Activated CD4-positive, alpha-beta memory T cell treated with anti-CD3 and anti-CD28 coated beads for 36 hours (primary cell): ENCODE measurements at regions of chr10 and their contacts with region 1.

Region 1: GRCh38 chr10:13776861-13777311 is 190.1 kb downstream of the PRPF18 start:
- DNase-seq: no peak
- H3K4me3 Mint-ChIP-seq: no peak overlapping the region
- H3K27ac Mint-ChIP-seq: no peak overlapping the region
- H3K4me1 Mint-ChIP-seq: no peaks in the 10 kb centered on the region
- H3K27me3 Mint-ChIP-seq: peaks cover 16% of the 10 kb centered on the region

Region 2: DNA sequence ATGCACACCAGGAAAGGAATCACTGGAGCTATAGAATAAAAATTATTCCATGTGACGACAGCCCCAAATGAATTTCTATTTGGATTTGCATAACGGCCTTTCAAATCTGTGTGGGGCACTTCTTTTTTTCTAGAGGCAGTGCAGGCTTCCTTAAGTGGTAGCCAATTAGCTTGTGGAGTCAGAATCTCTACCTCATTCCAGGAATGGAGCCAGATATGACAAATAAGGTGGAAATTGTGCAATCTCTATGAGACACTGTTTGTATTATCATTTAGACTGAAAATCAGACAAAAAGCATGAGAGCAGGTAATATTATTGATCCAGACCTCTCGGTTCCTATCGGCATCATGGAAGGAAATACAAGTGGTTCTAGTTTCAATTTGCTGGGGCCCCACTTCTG is 326.8 kb before region 1 on chr10:
- CTCF ChIA-PET with region 1: no interaction called
- POLR2A ChIA-PET with region 1: no interaction called
- intact Hi-C with region 1: no loop called
- DNase-seq: no peak
- H3K4me3 Mint-ChIP-seq: no peak overlapping the region
- H3K27ac Mint-ChIP-seq: no peak overlapping the region
- H3K4me1 Mint-ChIP-seq: peaks cover 6% of the 10 kb centered on the region
- H3K27me3 Mint-ChIP-seq: peaks cover 12% of the 10 kb centered on the region

Region 3: GRCh38 chr10:13659897-13660550 is 116.9 kb before region 1 on chr10:
- CTCF ChIA-PET with region 1: interaction called, 38 read pairs
- POLR2A ChIA-PET with region 1: no interaction called
- intact Hi-C with region 1: loop called (anchors 1 kb)
- DNase-seq: peak; percentile 77
- H3K4me3 Mint-ChIP-seq: no peak overlapping the region
- H3K27ac Mint-ChIP-seq: no peak overlapping the region
- H3K4me1 Mint-ChIP-seq: peaks cover 9% of the 10 kb centered on the region
- H3K27me3 Mint-ChIP-seq: no peaks in the 10 kb centered on the region

Region 4: GRCh38 chr10:13732465-13732881 is 44.4 kb before region 1 on chr10:
- CTCF ChIA-PET with region 1: no interaction called
- POLR2A ChIA-PET with region 1: no interaction called
- intact Hi-C with region 1: no loop called
- DNase-seq: no peak
- H3K4me3 Mint-ChIP-seq: no peak overlapping the region
- H3K27ac Mint-ChIP-seq: no peak overlapping the region
- H3K4me1 Mint-ChIP-seq: no peaks in the 10 kb centered on the region
- H3K27me3 Mint-ChIP-seq: no peaks in the 10 kb centered on the region